BJ (cell line): ENCODE measurements at regions of chr2 and their contacts with region 1.

Region 1: DNA sequence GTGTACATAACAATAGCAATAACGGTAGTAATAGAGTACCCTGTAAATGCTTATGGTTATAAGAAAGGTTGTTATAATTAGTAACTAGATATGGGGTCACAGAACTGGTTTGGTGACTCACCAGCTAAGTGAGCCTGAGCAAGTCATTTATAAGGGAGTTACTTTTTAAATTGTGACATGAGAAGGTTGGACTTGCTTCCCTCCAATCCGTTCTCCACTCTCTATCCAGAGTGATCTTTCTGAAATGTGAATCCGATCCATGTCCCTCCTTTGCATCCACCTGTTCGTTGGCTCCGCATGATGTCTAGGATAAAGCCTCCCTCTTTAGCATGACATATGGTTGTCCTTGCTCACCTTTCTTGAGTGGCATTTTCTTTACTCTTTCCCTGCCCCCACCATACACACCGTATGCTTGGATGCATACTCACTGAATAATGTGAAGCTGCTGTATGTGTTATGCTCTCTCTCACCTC is 83.1 kb downstream of the CDC42EP3 start:
- DNase-seq: no peak
- H3K4me3 ChIP-seq: no peak overlapping the region
- H3K27me3 ChIP-seq: no peaks in the 10 kb centered on the region
- CTCF ChIP-seq: no peak

Region 2: GRCh38 chr2:37561615-37562569 is 26.4 kb before region 1 on chr2:
- CTCF ChIA-PET with region 1: no interaction called
- POLR2A ChIA-PET with region 1: interaction called, 12 read pairs
- DNase-seq: no peak
- H3K4me3 ChIP-seq: no peak overlapping the region
- H3K27me3 ChIP-seq: no peaks in the 10 kb centered on the region
- CTCF ChIP-seq: no peak

Region 3: GRCh38 chr2:38128653-38129052 is 540.3 kb after region 1 on chr2:
- CTCF ChIA-PET with region 1: no interaction called
- POLR2A ChIA-PET with region 1: no interaction called
- DNase-seq: no peak
- H3K4me3 ChIP-seq: no peak overlapping the region
- H3K27me3 ChIP-seq: peaks cover 2% of the 10 kb centered on the region; the same call in 1 of the 2 replicates
- CTCF ChIP-seq: no peak